Endothelial cell of umbilical vein (primary cell): ENCODE measurements at regions of chr9 and their contacts with region 1.

Region 1: GRCh38 chr9:109440797-109441287 is 57.3 kb downstream of the PTPN3 start:
- DNase-seq: peak; percentile 74
- H3K4me3 ChIP-seq: no peak overlapping the region
- H3K27ac ChIP-seq: no peak overlapping the region
- H3K4me1 ChIP-seq: no peaks in the 10 kb centered on the region
- H3K27me3 ChIP-seq: peaks cover 13 to 23% of the 10 kb centered on the region in 2 experiments
- CTCF ChIP-seq: peak; percentile 70 to 73
- POLR2A ChIP-seq: no peak

Region 2: GRCh38 chr9:109411798-109412352 is 29.0 kb before region 1 on chr9:
- CTCF ChIA-PET with region 1: interaction called, 10 read pairs
- POLR2A ChIA-PET with region 1: no interaction called
- dilution Hi-C with region 1: no loop called
- intact Hi-C with region 1: no loop called
- DNase-seq: no peak
- H3K4me3 ChIP-seq: no peak overlapping the region
- H3K27ac ChIP-seq: no peak overlapping the region
- H3K4me1 ChIP-seq: no peaks in the 10 kb centered on the region
- H3K27me3 ChIP-seq: no peaks in the 10 kb centered on the region
- CTCF ChIP-seq: peak; percentile 49 to 50
- POLR2A ChIP-seq: no peak

Region 3: DNA sequence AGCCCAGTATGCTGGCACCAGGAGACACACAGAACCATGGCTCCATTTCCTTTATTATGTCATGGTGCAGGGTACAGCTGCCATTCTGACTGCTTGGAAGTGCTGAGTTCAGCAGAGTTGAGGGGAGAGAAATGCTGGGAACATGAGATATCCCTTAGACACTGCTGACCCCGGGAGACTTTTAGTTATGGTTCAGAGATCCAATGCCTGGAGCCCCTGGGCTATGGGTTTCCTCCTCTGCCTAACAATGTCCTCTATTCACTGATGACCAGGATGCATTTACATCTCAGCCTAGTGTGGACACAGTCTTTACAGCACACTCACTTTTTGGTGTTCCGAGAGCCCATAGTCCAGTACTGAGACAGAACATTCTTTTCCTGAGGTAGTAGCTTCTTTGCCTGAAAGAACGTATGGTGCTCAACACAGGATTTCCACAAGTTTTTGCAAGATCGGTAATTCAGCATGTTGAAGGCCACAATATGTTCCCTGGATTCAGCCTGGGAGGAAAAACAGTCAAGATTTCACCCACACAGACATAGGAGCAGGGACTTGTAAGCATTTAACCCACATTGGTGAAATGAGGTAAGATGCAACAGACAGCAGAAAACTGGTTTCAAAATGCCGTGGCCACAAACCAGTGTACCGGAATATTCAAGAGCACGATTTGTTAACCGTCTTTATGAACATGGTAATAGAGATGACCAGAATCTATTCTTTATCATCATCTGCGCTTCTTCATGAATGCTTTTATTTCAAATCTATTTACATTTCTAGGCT is 14.0 kb before region 1 on chr9:
- CTCF ChIA-PET with region 1: interaction called, 15 read pairs
- POLR2A ChIA-PET with region 1: no interaction called
- dilution Hi-C with region 1: no loop called
- intact Hi-C with region 1: no loop called
- DNase-seq: no peak
- H3K4me3 ChIP-seq: no peak overlapping the region
- H3K27ac ChIP-seq: no peak overlapping the region
- H3K4me1 ChIP-seq: no peaks in the 10 kb centered on the region
- H3K27me3 ChIP-seq: peaks cover 2% of the 10 kb centered on the region in 2 experiments
- CTCF ChIP-seq: no peak
- POLR2A ChIP-seq: no peak

Region 4: DNA sequence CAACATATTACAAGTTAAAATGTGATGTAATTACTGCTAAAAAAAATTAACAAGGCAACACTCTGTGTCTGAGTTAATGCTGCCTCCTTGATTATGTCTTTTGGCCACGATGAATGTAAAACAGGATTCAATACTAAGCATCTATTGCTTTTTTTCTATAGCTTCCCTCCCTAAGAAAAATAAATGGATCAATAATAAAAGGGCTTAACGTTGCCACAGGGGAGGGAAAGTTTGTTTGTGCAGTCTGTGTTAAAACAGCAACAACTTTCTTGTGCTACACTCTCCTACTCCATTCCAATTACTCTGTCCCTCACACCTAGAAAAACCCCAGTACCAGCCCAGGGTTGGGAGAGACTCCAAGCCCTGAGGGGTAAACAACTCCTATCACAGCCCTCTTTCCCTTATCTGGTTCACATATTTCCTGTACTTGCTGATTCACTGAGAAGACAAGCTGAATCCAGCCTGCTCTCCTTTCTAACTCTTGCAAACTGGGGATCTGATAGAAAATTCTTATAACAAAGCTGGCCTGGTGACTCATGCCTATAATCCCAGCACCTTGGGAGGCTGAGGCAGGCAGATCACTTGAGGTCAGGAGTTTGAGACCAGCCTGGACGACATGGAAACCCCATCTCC is 12.5 kb after region 1 on chr9:
- CTCF ChIA-PET with region 1: interaction called, 20 read pairs
- POLR2A ChIA-PET with region 1: no interaction called
- dilution Hi-C with region 1: no loop called
- intact Hi-C with region 1: no loop called
- DNase-seq: peak; percentile 54
- H3K4me3 ChIP-seq: no peak overlapping the region
- H3K27ac ChIP-seq: no peak overlapping the region
- H3K4me1 ChIP-seq: no peaks in the 10 kb centered on the region
- H3K27me3 ChIP-seq: peaks cover 15 to 31% of the 10 kb centered on the region in 2 experiments
- CTCF ChIP-seq: no peak
- POLR2A ChIP-seq: no peak

Region 5: DNA sequence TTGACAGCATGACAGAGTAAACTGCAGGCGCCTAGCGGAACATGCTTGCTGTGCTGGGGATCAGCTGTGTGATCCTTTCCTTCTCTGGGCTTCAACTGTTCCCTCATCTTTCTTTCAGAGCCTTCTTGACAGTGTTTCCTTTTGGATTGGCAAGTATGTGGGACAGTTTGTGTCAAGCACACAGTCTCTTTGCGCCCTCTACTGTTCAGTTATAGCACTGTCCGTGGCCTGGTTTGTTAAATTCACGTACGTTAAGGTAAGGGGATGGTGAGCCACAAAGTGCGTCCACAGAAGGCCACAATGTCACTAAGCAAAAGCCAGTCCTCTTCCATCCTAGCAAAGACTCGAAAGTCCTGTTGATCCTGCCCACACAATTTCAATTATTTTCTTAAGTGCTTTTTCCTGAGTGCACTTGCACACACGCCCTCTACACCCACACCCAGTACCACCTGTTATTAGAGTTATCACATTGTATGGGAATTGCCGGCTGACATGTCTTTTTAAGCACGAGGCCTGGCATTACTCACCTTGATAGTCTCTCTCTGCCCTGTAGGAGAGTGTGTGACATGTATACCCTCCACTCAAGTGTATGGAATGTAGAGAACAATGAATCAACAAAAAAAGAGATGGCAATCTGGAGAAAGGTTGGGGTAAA is 79.8 kb after region 1 on chr9:
- CTCF ChIA-PET with region 1: interaction called, 21 read pairs
- POLR2A ChIA-PET with region 1: no interaction called
- dilution Hi-C with region 1: no loop called
- intact Hi-C with region 1: loop called (anchors 1 kb)
- DNase-seq: peak; percentile 66
- H3K4me3 ChIP-seq: no peak overlapping the region
- H3K27ac ChIP-seq: no peak overlapping the region
- H3K4me1 ChIP-seq: no peaks in the 10 kb centered on the region
- H3K27me3 ChIP-seq: peaks cover 0 to 2% of the 10 kb centered on the region in 2 experiments
- CTCF ChIP-seq: peak; percentile 81 to 83
- POLR2A ChIP-seq: no peak